MCF 10A (cell line): ENCODE measurements at regions of chr4 and their contacts with region 1.

Region 1: GRCh38 chr4:139177868-139178611 is 1.0 kb upstream of the ELF2 start:
- DNase-seq: peak; percentile 94
- H3K4me3 Mint-ChIP-seq: peak overlapping the region; percentile 96
- H3K27ac Mint-ChIP-seq: peak overlapping the region; percentile 81
- H3K4me1 Mint-ChIP-seq: peaks cover 8% of the 10 kb centered on the region
- H3K27me3 Mint-ChIP-seq: no peaks in the 10 kb centered on the region
- CTCF ChIP-seq: no peak

Region 2: DNA sequence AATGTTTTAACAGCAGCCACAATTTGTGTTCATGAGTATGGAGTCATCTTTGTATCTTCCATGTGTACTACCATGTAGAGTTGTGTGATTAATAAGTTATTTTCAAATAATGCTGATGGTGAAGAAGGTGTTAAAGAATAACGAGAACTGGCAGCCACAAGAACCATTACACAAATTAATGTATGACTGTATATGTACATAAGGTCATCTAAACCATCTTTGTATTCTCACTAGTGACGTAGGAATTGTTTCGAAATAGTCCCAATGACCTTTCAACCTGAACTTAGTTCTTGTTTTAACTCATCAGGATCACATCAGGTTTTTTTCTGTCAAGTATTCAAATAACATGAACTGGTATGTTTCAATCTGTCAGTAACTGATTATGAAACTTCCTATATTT is 210.7 kb before region 1 on chr4:
- CTCF ChIA-PET with region 1: no interaction called
- POLR2A ChIA-PET with region 1: no interaction called
- intact Hi-C with region 1: no loop called
- DNase-seq: peak; percentile 37
- H3K4me3 Mint-ChIP-seq: no peak overlapping the region
- H3K27ac Mint-ChIP-seq: no peak overlapping the region
- H3K4me1 Mint-ChIP-seq: no peaks in the 10 kb centered on the region
- H3K27me3 Mint-ChIP-seq: no peaks in the 10 kb centered on the region
- CTCF ChIP-seq: no peak

Region 3: DNA sequence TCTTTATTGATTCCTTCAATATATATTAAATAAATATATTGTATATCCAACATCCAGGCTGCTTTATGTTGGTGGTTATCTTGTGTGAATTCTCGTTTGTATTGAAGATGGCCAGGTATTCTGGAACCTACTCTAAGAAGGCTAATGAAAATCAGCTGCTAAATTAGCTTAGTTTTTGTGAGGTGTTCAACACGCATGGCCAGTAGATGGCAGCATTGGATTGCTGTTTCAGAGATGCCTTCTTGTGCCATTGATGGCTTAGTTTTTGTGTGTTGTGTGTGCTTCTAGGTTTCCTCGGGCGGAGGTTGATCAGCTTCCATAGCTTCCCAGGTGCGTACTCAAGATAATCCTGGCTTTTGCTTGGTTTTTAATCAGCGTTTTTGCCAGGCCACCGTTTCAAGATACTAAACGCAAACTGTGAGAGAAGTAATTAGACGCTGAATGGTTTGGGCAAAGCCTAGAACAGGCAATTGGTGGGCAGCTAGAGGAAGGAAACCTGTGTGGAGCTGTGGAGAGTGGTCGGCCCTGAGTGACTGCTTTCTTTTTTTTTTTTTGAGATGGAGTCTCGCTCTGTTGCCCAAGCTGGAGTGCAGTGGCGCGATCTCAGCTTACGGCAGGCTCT is 147.3 kb before region 1 on chr4:
- CTCF ChIA-PET with region 1: interaction called, 5 read pairs
- POLR2A ChIA-PET with region 1: interaction called, 19 read pairs
- intact Hi-C with region 1: no loop called
- DNase-seq: peak; percentile 85
- H3K4me3 Mint-ChIP-seq: no peak overlapping the region
- H3K27ac Mint-ChIP-seq: no peak overlapping the region
- H3K4me1 Mint-ChIP-seq: peaks cover 11% of the 10 kb centered on the region
- H3K27me3 Mint-ChIP-seq: no peaks in the 10 kb centered on the region
- CTCF ChIP-seq: peak; percentile 70

Region 4: GRCh38 chr4:139167774-139168444 is 10.1 kb before region 1 on chr4:
- CTCF ChIA-PET with region 1: interaction called, 3 read pairs
- POLR2A ChIA-PET with region 1: interaction called, 72 read pairs
- intact Hi-C with region 1: no loop called
- DNase-seq: peak; percentile 87
- H3K4me3 Mint-ChIP-seq: no peak overlapping the region
- H3K27ac Mint-ChIP-seq: peak overlapping the region; percentile 27
- H3K4me1 Mint-ChIP-seq: peaks cover 30% of the 10 kb centered on the region
- H3K27me3 Mint-ChIP-seq: no peaks in the 10 kb centered on the region
- CTCF ChIP-seq: peak; percentile 57

Region 5: GRCh38 chr4:139229534-139230039 is 51.5 kb after region 1 on chr4:
- CTCF ChIA-PET with region 1: interaction called, 13 read pairs
- POLR2A ChIA-PET with region 1: interaction called, 9 read pairs
- intact Hi-C with region 1: no loop called
- DNase-seq: peak; percentile 72
- H3K4me3 Mint-ChIP-seq: no peak overlapping the region
- H3K27ac Mint-ChIP-seq: no peak overlapping the region
- H3K4me1 Mint-ChIP-seq: no peaks in the 10 kb centered on the region
- H3K27me3 Mint-ChIP-seq: no peaks in the 10 kb centered on the region
- CTCF ChIP-seq: peak; percentile 62

Region 6: DNA sequence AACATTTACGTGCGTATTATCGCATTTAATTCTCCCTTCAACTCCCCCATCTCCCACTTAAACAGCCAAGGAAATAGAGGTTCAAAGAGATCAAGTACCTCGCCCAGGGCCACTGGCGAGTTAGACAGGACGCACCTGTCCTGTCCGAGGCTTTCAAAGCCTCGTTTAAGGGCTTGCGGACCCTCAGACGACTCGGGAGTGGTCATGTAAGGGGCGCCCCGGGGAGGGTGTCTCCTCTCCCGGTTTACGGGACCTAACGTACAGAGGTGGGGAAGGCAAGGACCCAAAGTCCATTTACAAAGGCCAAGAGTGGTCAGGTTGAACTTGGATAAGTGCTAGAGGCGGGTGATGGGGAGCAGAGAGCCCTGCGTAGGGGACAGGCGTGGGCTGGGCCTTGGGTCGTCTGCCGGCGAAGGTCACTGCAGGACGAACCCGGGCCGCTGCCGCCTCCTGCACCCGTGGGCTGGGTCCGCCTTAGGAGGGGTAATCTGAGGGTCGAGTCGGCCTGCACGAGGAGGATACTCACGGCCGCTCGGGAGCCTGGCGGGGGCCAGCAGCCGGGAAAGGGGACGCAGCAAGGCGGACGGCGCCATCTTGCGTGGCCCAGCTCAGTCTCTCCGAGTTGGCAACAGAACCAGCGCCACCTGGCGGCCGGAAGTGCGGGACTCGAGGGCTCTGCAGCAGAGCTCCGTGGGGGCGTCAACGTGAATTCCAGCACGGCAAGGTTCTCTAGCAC is 117.3 kb after region 1 on chr4:
- CTCF ChIA-PET with region 1: interaction called, 16 read pairs
- POLR2A ChIA-PET with region 1: interaction called, 254 read pairs
- intact Hi-C with region 1: no loop called
- DNase-seq: peak; percentile 92
- H3K4me3 Mint-ChIP-seq: peak overlapping the region; percentile 78
- H3K27ac Mint-ChIP-seq: peak overlapping the region; percentile 97
- H3K4me1 Mint-ChIP-seq: peaks cover 2% of the 10 kb centered on the region
- H3K27me3 Mint-ChIP-seq: no peaks in the 10 kb centered on the region
- CTCF ChIP-seq: peak; percentile 93

Region 7: DNA sequence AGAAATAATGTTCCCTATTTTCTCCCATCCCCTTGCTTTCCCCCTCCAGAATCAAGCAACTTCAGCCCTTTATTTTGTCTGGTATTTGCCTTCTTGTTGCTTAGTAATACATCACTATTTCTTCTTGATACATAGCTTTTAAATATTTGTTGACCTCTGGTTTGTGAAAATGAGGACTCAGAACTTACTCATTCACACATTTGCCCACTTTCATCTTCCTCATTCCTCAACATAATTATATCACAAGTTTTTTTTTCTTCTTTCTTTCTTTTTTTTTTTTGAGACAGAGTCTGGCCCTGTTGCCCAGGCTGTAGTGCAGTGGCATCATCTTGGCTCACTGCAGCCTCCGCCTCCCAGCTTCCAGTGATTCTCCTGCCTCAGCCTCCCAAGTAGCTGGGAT is 153.1 kb after region 1 on chr4:
- CTCF ChIA-PET with region 1: no interaction called
- POLR2A ChIA-PET with region 1: interaction called, 12 read pairs
- intact Hi-C with region 1: no loop called
- DNase-seq: no peak
- H3K4me3 Mint-ChIP-seq: no peak overlapping the region
- H3K27ac Mint-ChIP-seq: peak overlapping the region; percentile 24
- H3K4me1 Mint-ChIP-seq: no peaks in the 10 kb centered on the region
- H3K27me3 Mint-ChIP-seq: no peaks in the 10 kb centered on the region
- CTCF ChIP-seq: no peak